Left colon (tissue), 2 donors: ENCODE measurements at regions of chr2 and their contacts with region 1.

Region 1: GRCh38 chr2:200471324-200471848 is 38.5 kb downstream of the KCTD18 start:
- DNase-seq: peak in 1 of 2 donors; percentile 21
- ATAC-seq: peak; percentile 57

Region 2: GRCh38 chr2:199985625-199986207 is 485.7 kb before region 1 on chr2:
- intact Hi-C with region 1: loop called in 1 of 2 experiments (anchors 10 kb)
- DNase-seq: peak; percentile 70 to 79
- ATAC-seq: peak; percentile 92

Region 3: GRCh38 chr2:200319548-200320337 is 151.6 kb before region 1 on chr2:
- intact Hi-C with region 1: loop called in 1 of 2 experiments (anchors 10 kb)
- DNase-seq: no peak
- ATAC-seq: no peak

Region 4: DNA sequence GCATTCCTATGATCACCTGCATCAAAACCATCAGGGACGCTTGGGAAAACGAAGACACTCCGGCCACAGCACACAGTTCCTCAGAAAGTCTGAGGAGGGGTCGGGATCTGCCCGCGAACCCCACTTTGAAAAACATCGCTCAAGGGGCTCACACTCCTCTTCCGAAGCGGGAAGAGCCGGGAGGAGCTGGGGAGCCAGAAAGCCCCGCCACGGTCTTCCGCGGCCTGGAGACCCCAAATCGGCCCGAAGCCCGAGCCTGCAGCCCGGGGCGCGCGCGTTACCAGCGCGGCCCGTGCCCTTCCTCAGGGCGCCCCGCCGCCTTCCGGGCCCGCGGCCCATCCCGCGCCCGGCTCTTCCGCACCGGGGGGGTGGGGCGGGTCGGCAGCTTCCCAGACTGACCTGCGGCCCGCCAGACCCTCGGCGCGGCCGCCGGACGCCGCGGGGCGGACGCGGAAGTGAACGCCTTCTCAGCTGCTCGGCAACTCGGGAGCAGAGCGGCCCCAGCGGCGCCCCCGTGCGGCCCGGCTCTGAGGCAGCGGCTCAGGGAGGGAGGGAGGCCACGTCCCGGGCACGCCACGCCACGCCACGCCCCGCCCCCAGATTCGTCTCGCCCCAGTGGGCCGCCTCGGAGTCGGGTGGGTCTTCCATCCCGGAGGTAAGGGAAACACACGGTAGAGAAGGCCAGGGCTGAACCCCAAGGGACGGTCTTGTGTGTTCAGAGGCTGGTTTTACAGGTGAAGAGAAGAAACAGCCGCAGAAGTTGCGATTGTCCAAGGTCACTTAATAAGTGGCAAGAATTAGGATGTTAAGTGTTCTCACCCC is 38.4 kb after region 1 on chr2 and contains the start of gene KCTD18:
- intact Hi-C with region 1: no loop called
- DNase-seq: peak; percentile 93 to 96
- ATAC-seq: peak; percentile 95
- total RNA-seq, gene KCTD18: 13.5 to 16.2 TPM